Thyroid gland (tissue), 4 donors: ENCODE measurements at regions of chr2 and their contacts with region 1.

Region 1: GRCh38 chr2:182649316-182649715 is 66.7 kb upstream of the DNAJC10 start:
- DNase-seq: peak; percentile 20 to 34
- H3K4me3 ChIP-seq: no peak overlapping the region
- H3K27ac ChIP-seq: no peak overlapping the region
- H3K4me1 ChIP-seq: peaks cover 0 to 5% of the 10 kb centered on the region in 2 donors
- H3K27me3 ChIP-seq: no peaks in the 10 kb centered on the region
- CTCF ChIP-seq: peak in 4 of 6 experiments; percentile 39 to 72 (median 56)
- POLR2A ChIP-seq: no peak

Region 2: DNA sequence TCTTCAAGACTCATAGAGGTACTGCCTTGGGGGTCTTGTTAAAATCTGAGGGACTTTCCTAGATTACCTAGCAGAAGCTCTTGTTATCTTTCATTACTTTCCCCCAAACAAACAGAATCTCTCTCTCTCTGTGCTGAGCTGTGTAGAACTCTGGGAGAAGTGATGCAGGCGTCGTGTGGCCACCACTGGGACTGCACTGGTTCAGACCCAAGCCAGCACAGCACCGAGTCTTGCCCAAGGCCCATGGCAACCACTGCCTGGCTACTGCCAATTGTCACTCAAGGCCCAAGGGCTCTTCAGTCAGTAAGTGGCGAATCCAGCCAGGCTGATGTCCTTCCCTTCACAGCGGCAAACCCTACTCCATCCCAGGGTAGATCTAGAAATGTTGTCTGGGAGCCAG is 635.0 kb before region 1 on chr2:
- intact Hi-C with region 1: no loop called
- DNase-seq: no peak
- H3K4me3 ChIP-seq: no peak overlapping the region
- H3K27ac ChIP-seq: no peak overlapping the region
- H3K4me1 ChIP-seq: no peaks in the 10 kb centered on the region
- H3K27me3 ChIP-seq: no peaks in the 10 kb centered on the region
- CTCF ChIP-seq: no peak
- POLR2A ChIP-seq: no peak

Region 3: DNA sequence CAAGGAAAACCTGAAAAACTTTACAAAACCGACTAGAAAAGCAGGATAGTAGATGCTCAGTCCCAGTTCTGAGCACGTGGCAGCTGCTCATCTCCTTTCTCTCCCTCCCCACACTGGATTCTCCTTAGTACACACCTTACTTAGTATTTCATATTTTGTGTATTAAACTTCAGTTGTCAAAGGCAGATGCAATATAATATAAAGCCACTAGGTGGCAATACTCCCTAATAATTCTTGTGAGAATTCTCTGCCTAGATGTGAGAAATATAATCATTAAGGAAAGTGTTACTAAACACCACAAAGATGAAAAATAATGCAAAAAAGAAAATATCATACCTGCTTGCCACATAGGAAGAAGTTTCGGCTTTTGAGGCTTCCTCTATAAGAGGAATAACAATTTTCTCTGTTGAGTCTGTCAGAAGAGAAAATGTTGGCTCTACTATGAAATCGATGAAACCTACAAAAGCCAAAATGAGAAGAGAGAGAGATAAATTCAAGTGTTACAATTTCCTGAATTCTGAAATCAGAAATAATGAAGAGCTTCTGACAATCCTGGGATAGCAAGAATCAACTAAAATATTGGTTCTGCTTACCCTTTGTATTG is 463.1 kb before region 1 on chr2:
- intact Hi-C with region 1: loop called (anchors 5 kb)
- DNase-seq: no peak
- H3K4me3 ChIP-seq: no peak overlapping the region
- H3K27ac ChIP-seq: no peak overlapping the region
- H3K4me1 ChIP-seq: no peaks in the 10 kb centered on the region
- H3K27me3 ChIP-seq: no peaks in the 10 kb centered on the region
- CTCF ChIP-seq: peak; percentile 56 to 92 (median 78)
- POLR2A ChIP-seq: no peak

Region 4: GRCh38 chr2:182553483-182553882 is 95.8 kb before region 1 on chr2:
- intact Hi-C with region 1: no loop called
- DNase-seq: no peak
- H3K4me3 ChIP-seq: no peak overlapping the region
- H3K27ac ChIP-seq: no peak overlapping the region
- H3K4me1 ChIP-seq: peaks cover 3% of the 10 kb centered on the region in 2 donors
- H3K27me3 ChIP-seq: no peaks in the 10 kb centered on the region
- CTCF ChIP-seq: no peak
- POLR2A ChIP-seq: no peak

Region 5: DNA sequence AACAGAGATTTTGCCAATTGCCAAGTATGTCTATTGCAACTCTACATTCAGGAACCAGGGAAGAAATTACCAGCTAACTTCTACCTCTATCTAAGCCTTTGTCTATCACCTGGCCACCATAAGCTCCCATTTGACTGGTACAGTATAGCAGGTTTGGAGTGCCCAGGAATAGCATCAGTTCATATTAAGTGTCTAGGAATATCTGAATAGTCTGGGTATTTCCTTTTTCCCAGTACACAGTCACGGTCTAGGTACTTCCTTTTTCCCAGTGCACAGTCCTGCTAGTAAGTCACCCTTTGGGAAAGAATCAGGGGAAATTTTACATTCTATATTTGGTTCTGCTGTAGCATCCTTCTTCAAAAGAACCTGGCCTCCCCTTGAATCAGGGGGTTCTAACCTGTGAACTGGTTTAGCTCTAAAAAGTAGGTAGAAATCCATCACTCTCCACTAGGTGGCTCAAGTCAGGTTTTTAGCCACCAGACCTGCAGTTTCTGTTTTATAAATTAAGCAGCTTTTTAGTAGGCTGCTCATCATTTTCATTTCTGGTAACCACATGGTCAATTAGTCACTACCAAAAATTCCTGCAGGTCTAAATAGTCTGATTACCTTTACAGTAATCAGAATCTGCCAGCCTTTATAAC is 17.5 kb after region 1 on chr2:
- intact Hi-C with region 1: no loop called
- DNase-seq: no peak
- H3K4me3 ChIP-seq: no peak overlapping the region
- H3K27ac ChIP-seq: no peak overlapping the region
- H3K4me1 ChIP-seq: no peaks in the 10 kb centered on the region
- H3K27me3 ChIP-seq: no peaks in the 10 kb centered on the region
- CTCF ChIP-seq: peak in 3 of 6 experiments; percentile 16 to 50 (median 32)
- POLR2A ChIP-seq: no peak